ENCODE measurements at regions of chr2 and their contacts with region 1.

Region 1: DNA sequence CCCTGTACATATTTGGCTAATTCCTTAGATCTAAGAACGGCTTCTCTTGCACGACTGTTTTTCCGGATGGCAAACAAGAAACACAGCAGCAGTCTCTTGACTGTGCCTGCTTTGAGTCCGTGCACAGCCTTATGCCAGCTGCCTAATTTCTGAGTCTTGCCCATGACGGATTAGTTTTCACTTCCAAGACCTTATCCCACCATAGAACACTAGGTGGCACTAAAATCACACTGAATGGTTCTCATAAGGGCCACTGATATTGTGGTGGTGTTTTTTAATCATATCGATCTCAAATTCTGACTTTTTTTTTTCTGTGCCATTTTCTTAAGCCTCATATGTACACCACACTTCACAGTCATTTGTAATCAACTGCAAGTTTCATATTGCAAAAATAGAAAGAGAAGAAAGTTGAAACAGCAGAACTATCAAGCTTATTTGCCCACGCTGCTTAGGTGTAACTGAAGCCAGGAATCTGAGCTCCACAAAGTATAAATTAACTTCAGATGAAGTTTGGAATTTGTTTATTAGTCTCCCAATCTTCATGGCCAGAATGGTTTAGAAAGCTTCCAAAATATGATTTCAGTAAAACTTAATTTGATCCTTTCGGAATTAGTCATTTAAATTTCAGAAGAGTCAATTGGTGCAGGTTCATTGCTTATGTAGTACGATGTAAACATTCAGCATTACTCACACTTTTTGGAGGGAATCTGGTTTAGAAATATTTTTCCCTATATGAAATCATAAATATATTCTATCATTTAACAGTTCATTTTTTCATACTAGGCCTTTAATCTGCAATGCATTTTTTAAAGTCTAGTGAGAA is 45.5 kb upstream of the SCN7A start:
- DNase-seq: no peak
- ATAC-seq: peak; percentile 68
- H3K4me3 Mint-ChIP-seq: no peak overlapping the region
- H3K27ac Mint-ChIP-seq: no peak overlapping the region
- H3K4me1 Mint-ChIP-seq: peaks cover 2% of the 10 kb centered on the region
- H3K27me3 Mint-ChIP-seq: peaks cover 5% of the 10 kb centered on the region
- CTCF ChIP-seq: peak; percentile 47

Region 2: DNA sequence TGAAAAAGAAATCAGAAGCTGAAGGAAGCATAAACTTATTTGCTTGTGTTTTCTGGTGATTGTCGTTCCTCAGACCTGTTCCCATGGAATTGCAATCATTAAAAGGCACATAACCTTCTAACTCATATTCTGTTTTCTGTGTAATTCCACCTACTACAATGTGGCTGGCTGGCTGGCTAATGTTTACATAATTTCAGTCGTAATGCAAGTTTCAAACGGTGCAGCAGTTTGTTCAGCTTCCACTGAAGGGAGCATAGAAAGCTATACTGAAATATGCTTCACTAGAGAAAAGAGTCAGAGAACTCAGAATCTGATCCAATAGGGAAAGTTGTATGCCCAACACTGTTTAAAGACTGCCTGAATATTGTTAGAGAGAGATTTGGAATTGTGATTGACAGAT is 18.4 kb before region 1 on chr2:
- CTCF ChIA-PET with region 1: no interaction called
- POLR2A ChIA-PET with region 1: no interaction called
- intact Hi-C with region 1: no loop called
- DNase-seq: no peak
- ATAC-seq: no peak
- H3K4me3 Mint-ChIP-seq: no peak overlapping the region
- H3K27ac Mint-ChIP-seq: no peak overlapping the region
- H3K4me1 Mint-ChIP-seq: no peaks in the 10 kb centered on the region
- H3K27me3 Mint-ChIP-seq: no peaks in the 10 kb centered on the region
- CTCF ChIP-seq: no peak

Region 3: DNA sequence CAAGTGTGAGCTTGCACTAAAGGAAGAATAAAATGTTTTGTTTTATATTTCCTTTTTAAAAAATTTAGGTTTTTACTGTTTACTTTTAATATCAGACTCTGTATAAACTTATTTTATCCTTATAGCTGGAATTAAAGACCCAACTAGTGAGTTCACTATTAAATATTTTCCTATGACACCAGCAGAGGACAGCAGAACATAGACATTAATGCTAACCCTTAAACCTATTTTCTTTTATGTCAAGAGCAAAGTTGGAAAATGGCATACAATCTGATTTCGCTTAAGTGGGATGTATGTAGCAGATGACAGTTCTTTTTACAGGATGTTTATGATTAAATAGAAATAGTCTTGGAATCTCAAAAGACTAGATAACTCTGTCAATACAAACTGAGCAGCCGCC is 160.5 kb after region 1 on chr2:
- CTCF ChIA-PET with region 1: no interaction called
- POLR2A ChIA-PET with region 1: no interaction called
- intact Hi-C with region 1: no loop called
- DNase-seq: no peak
- ATAC-seq: no peak
- H3K4me3 Mint-ChIP-seq: no peak overlapping the region
- H3K27ac Mint-ChIP-seq: no peak overlapping the region
- H3K4me1 Mint-ChIP-seq: no peaks in the 10 kb centered on the region
- H3K27me3 Mint-ChIP-seq: no peaks in the 10 kb centered on the region
- CTCF ChIP-seq: no peak

Region 4: DNA sequence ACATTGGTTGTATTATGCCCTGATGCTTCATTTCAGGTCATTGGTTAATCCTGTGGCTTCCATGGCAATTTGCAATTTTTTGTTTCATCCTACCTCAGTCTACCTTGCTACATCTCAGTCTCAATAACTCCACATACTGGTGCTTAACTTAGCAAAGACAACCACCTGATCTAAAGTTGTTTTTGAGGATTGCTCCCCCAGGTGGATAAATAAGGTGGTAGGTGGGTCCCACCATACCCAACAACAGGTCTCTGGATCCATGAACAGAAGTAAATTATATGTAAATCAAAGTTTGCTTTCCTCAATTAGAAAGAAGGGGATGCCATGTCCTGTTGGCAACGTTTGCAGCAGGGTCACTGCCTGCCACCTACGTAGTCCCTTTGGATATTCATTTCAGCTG is 355.7 kb after region 1 on chr2:
- CTCF ChIA-PET with region 1: no interaction called
- POLR2A ChIA-PET with region 1: no interaction called
- intact Hi-C with region 1: loop called (anchors 10 kb)
- DNase-seq: no peak
- ATAC-seq: no peak
- H3K4me3 Mint-ChIP-seq: no peak overlapping the region
- H3K27ac Mint-ChIP-seq: no peak overlapping the region
- H3K4me1 Mint-ChIP-seq: no peaks in the 10 kb centered on the region
- H3K27me3 Mint-ChIP-seq: no peaks in the 10 kb centered on the region
- CTCF ChIP-seq: no peak

Region 5: GRCh38 chr2:167964650-167965413 is 1425.3 kb after region 1 on chr2:
- CTCF ChIA-PET with region 1: no interaction called
- POLR2A ChIA-PET with region 1: no interaction called
- intact Hi-C with region 1: loop called (anchors 1 kb)
- DNase-seq: no peak
- ATAC-seq: no peak
- H3K4me3 Mint-ChIP-seq: no peak overlapping the region
- H3K27ac Mint-ChIP-seq: no peak overlapping the region
- H3K4me1 Mint-ChIP-seq: peaks cover 20% of the 10 kb centered on the region
- H3K27me3 Mint-ChIP-seq: no peaks in the 10 kb centered on the region
- CTCF ChIP-seq: no peak

Measured in activated B cell treated with CpG ODN at 0.5 μM for 24 hours (primary cell).